HEK293T (cell line): ENCODE measurements at regions of chr7 and their contacts with region 1.

Region 1: GRCh38 chr7:38335492-38336147 is 62.2 kb upstream of the TARP start:
- DNase-seq: peak; percentile 77

Region 2: DNA sequence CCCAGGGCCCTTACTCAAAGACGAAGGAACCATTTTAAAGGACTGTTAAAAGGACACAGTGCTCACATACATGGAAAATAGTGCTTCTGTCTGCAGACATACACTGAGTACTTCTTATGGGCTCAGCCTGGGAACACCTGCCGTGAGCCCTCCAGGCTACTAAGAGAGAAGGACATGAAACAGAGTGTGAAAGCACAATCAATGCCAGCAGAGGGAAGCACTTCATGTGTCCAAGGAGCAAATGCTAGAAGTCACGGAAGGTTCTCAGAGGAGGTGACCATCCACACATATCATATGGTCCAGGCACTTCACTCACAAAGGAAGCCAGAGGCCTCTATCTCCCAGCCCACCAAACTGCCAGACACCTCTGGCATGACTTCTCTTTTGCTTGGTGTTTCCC is 902.5 kb before region 1 on chr7:
- CTCF ChIA-PET with region 1: no interaction called
- POLR2A ChIA-PET with region 1: no interaction called
- DNase-seq: peak; percentile 24

Region 3: DNA sequence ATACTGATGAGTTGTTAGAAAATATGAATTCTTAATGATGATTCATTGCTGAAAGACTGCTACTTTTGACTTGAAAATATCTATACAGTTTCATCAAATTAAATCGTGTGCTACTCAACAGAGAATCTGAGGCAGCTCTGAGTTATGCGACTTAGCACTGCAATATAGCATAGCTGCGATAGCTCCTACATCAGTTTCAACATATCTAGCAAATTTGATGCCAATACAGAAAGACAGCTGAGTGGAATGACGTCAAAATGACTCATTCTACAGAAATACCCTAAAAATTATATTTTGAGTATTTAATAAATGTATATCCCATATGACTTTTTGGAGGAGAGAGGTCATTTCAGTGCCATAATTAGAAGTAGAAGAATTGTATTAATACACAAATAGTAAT is 61.1 kb before region 1 on chr7:
- CTCF ChIA-PET with region 1: no interaction called
- POLR2A ChIA-PET with region 1: no interaction called
- DNase-seq: no peak

Region 4: GRCh38 chr7:38318803-38319416 is 16.7 kb before region 1 on chr7:
- CTCF ChIA-PET with region 1: interaction called, 12 read pairs
- POLR2A ChIA-PET with region 1: no interaction called
- DNase-seq: peak; percentile 77

Region 5: DNA sequence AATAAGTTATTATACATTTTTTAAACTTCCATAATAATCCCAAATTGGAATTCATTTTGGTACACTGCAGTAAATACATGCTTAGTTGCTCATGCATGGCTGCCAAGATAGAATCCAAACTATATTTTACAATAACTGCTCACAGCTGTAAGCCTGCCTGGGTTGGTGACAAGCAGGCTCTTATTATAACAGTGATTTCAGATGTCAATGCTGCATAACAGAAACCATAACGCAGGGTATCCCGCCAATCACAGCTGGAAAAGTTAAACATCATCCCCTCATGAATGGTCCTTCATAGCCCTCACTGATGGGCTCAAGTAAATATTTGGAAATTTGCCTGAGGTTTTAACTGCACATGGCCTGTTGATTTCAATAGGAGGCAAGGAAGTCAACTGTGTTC is 145.8 kb after region 1 on chr7:
- CTCF ChIA-PET with region 1: no interaction called
- POLR2A ChIA-PET with region 1: no interaction called
- DNase-seq: no peak